T-cell (primary cell): ENCODE measurements at regions of chr22 and their contacts with region 1.

Region 1: GRCh38 chr22:20568989-20569769 is 61.8 kb downstream of the MED15 start:
- DNase-seq: peak; percentile 75 to 93 (median 85)
- ATAC-seq: peak; percentile 69 to 79 (median 76)
- H3K4me3 ChIP-seq: peak overlapping the region; percentile 29 to 41
- H3K4me3 Mint-ChIP-seq: peak overlapping the region; percentile 70 to 86 (median 77)
- H3K27ac ChIP-seq: peak overlapping the region; percentile 61
- H3K27ac Mint-ChIP-seq: peak overlapping the region; percentile 93 to 97
- H3K4me1 ChIP-seq: peaks cover 67 to 91% of the 10 kb centered on the region in 2 experiments
- H3K4me1 Mint-ChIP-seq: peaks cover 85 to 92% (median 90%) of the 10 kb centered on the region in 3 donors
- H3K27me3 ChIP-seq: no peaks in the 10 kb centered on the region
- H3K27me3 Mint-ChIP-seq: no peaks in the 10 kb centered on the region

Region 2: GRCh38 chr22:20551805-20552442 is 17.3 kb before region 1 on chr22:
- CTCF ChIA-PET with region 1: interaction called, 6 to 29 read pairs
- POLR2A ChIA-PET with region 1: interaction called in 1 of 2 experiments, 7 read pairs
- DNase-seq: peak in 16 of 35 experiments; percentile 21 to 60 (median 39)
- ATAC-seq: peak in 2 of 4 experiments; percentile 24
- H3K4me3 ChIP-seq: peak overlapping the region in 1 of 2 donors; percentile 39
- H3K4me3 Mint-ChIP-seq: peak overlapping the region; percentile 75 to 81 (median 79)
- H3K27ac ChIP-seq: peak overlapping the region; percentile 82
- H3K27ac Mint-ChIP-seq: peak overlapping the region; percentile 98 to 99
- H3K4me1 ChIP-seq: peaks cover 73 to 98% of the 10 kb centered on the region in 2 experiments
- H3K4me1 Mint-ChIP-seq: peaks cover 84 to 97% (median 93%) of the 10 kb centered on the region in 3 donors
- H3K27me3 ChIP-seq: no peaks in the 10 kb centered on the region
- H3K27me3 Mint-ChIP-seq: no peaks in the 10 kb centered on the region

Region 3: DNA sequence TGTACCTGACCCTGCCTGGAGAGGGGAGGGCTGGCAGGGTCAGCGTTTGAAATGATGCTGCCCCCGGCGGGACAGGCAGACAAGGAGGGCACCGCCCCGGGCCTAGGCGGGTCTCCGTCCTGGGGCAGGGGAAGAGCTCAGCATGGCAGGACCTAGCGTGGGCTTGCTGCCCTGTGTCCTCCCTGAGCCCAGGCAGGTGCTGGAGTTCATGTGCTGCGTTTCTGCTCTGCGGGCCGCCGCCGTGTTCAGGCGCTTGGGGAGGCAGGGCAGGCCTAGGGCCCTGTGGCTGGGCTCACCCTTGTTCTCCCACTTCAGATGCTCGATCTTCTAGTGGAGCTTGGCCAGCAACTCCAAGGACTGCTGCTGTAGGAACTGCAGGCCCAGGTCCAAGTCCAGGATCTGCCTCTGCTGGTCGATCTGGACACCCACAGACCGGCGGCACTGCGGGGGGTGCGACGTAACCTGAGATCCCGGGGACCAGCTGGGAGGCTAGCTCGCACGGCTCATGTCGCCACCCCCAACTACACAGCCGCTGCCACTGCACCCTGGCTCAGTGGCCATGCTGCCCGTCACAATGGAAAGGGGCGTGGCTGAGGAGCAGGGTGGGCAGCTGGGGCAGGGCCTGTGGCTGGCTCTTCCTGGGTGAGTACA is 22.6 kb after region 1 on chr22:
- CTCF ChIA-PET with region 1: no interaction called
- POLR2A ChIA-PET with region 1: no interaction called
- DNase-seq: no peak
- ATAC-seq: no peak
- H3K4me3 ChIP-seq: no peak overlapping the region
- H3K4me3 Mint-ChIP-seq: no peak overlapping the region
- H3K27ac ChIP-seq: no peak overlapping the region
- H3K27ac Mint-ChIP-seq: no peak overlapping the region
- H3K4me1 ChIP-seq: peaks cover 0 to 14% of the 10 kb centered on the region in 2 experiments
- H3K4me1 Mint-ChIP-seq: peaks cover 4 to 8% (median 7%) of the 10 kb centered on the region in 3 donors
- H3K27me3 ChIP-seq: no peaks in the 10 kb centered on the region
- H3K27me3 Mint-ChIP-seq: no peaks in the 10 kb centered on the region